Calu3 (cell line): ENCODE measurements at regions of chr22 and their contacts with region 1.

Region 1: DNA sequence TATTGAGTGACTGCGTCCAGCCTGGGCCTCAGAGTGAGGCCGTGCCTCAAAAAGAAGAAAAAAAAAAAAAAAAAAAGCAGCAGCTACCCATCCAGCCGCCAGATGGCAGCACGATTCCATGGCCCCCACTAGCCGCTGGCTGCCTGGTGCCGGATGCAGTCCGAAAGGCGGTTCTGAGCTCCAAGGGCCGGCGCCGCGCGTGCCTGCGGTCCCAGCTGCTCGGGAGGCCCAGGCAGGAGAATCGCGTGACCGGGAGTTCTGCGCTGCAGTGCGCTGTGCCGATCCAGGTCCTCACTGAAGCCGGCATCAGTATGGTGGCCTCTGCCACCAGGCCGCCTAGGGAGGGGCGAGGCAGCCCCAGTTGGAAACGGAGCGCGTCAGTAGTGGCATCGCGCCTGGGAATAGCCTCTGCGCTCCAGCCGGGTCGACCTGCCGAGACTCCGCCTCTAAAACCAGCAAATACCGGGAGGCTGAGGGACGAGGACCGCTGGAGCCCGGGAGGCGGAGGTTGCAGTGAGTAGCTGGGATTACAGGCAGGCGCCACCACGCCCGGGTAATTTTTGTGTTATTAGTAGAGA is 19.3 kb downstream of the SCARF2 start:
- DNase-seq: peak; percentile 72
- H3K4me3 Mint-ChIP-seq: peak overlapping the region; percentile 62
- H3K27ac Mint-ChIP-seq: no peak overlapping the region
- H3K4me1 Mint-ChIP-seq: peaks cover 2% of the 10 kb centered on the region
- H3K27me3 Mint-ChIP-seq: peaks cover 29% of the 10 kb centered on the region
- CTCF ChIP-seq: peak; percentile 87

Region 2: GRCh38 chr22:20298803-20299735 is 119.2 kb before region 1 on chr22:
- CTCF ChIA-PET with region 1: no interaction called
- intact Hi-C with region 1: no loop called
- DNase-seq: peak; percentile 79
- H3K4me3 Mint-ChIP-seq: peak overlapping the region; percentile 83
- H3K27ac Mint-ChIP-seq: no peak overlapping the region
- H3K4me1 Mint-ChIP-seq: peaks cover 15% of the 10 kb centered on the region
- H3K27me3 Mint-ChIP-seq: peaks cover 87% of the 10 kb centered on the region
- CTCF ChIP-seq: no peak

Region 3: GRCh38 chr22:20319745-20320658 is 98.3 kb before region 1 on chr22 and contains the start of gene DGCR6L:
- CTCF ChIA-PET with region 1: interaction called, 10 read pairs
- intact Hi-C with region 1: no loop called
- DNase-seq: peak; percentile 97
- H3K4me3 Mint-ChIP-seq: peak within 1 kb of the TSS; percentile 96
- H3K27ac Mint-ChIP-seq: peak within 1 kb of the TSS; percentile 64
- H3K4me1 Mint-ChIP-seq: peaks cover 18% of the 10 kb centered on the region
- H3K27me3 Mint-ChIP-seq: no peaks in the 10 kb centered on the region
- CTCF ChIP-seq: no peak
- total RNA-seq, gene DGCR6L: 35.0 and 39.6 TPM in 2 replicates

Region 4: GRCh38 chr22:20456064-20456721 is 37.9 kb after region 1 on chr22:
- CTCF ChIA-PET with region 1: interaction called, 48 read pairs
- intact Hi-C with region 1: no loop called
- DNase-seq: peak; percentile 76
- H3K4me3 Mint-ChIP-seq: no peak overlapping the region
- H3K27ac Mint-ChIP-seq: no peak overlapping the region
- H3K4me1 Mint-ChIP-seq: no peaks in the 10 kb centered on the region
- H3K27me3 Mint-ChIP-seq: no peaks in the 10 kb centered on the region
- CTCF ChIP-seq: peak; percentile 74